ENCODE measurements at regions of chr7 and their contacts with region 1.

Region 1: DNA sequence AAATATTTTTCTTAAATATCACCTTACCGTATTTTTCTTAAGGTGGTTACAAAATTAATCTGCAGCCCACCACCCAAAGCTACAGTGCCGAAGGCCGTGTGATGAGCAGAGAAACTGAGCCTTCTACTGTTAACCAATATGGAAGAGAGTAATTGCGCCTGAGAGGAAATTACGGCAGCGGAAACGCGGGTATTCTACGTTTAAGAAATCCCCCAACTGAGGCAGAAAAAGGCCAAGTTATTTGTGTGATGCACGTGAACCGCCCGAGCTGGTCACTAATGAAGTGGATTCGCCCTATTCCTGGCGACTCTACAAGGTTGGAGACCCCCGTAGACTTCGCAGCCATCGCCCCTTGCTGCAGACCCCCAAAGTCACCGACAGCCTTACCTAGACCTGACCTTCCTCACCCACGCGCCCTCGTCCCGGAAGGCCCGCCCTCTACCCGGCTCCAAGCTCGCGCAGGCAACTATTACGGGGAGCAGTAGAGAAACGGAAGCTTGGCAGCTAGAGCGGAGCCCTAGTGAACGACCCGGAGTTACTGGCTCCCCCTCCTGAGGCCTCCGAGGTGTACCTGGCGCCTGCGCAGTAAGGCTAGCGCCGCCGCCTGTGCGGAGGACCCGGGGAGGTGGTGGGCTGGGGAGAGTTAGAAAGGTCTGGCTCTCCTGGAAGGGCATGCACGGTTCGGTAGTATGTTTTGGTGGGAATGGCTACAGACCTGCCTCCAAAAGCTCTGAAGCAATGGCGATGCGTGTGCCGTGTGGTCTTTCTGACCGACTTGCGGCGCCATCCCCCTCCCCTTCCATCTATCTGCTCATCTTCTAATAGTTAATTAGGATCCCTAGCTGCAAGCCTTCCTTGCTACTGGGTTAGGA is at the start of gene MRPS33:
- DNase-seq: peak; percentile 97
- ATAC-seq: peak; percentile 91
- H3K4me3 Mint-ChIP-seq: peak within 1 kb of the TSS; percentile 96
- H3K27ac Mint-ChIP-seq: peak within 1 kb of the TSS; percentile 99
- H3K4me1 Mint-ChIP-seq: peaks cover 32% of the 10 kb centered on the region
- H3K27me3 Mint-ChIP-seq: peaks cover 9% of the 10 kb centered on the region
- total RNA-seq, gene MRPS33: 101 to 104 TPM

Region 2: GRCh38 chr7:139180700-139181311 is 1834.0 kb before region 1 on chr7:
- CTCF ChIA-PET with region 1: no interaction called
- POLR2A ChIA-PET with region 1: no interaction called
- intact Hi-C with region 1: no loop called
- DNase-seq: no peak
- ATAC-seq: no peak
- H3K4me3 Mint-ChIP-seq: no peak overlapping the region
- H3K27ac Mint-ChIP-seq: no peak overlapping the region
- H3K4me1 Mint-ChIP-seq: no peaks in the 10 kb centered on the region
- H3K27me3 Mint-ChIP-seq: no peaks in the 10 kb centered on the region

Region 3: GRCh38 chr7:140397784-140398750 is 616.7 kb before region 1 on chr7 and contains the start of gene SLC37A3:
- CTCF ChIA-PET with region 1: no interaction called
- POLR2A ChIA-PET with region 1: no interaction called
- intact Hi-C with region 1: loop called in 1 of 2 experiments (anchors 5 kb)
- DNase-seq: peak; percentile 94
- ATAC-seq: peak; percentile 86
- H3K4me3 Mint-ChIP-seq: peak within 1 kb of the TSS; percentile 88
- H3K27ac Mint-ChIP-seq: peak within 1 kb of the TSS; percentile 91
- H3K4me1 Mint-ChIP-seq: peaks cover 37% of the 10 kb centered on the region
- H3K27me3 Mint-ChIP-seq: no peaks in the 10 kb centered on the region
- total RNA-seq, gene SLC37A3: 47.5 to 55.5 TPM

Region 4: GRCh38 chr7:140673063-140673773 is 341.5 kb before region 1 on chr7:
- CTCF ChIA-PET with region 1: interaction called, 3 read pairs
- POLR2A ChIA-PET with region 1: no interaction called
- intact Hi-C with region 1: loop called in 1 of 2 experiments (anchors 1 kb)
- DNase-seq: peak; percentile 72
- ATAC-seq: peak; percentile 74
- H3K4me3 Mint-ChIP-seq: peak overlapping the region; percentile 85
- H3K27ac Mint-ChIP-seq: peak overlapping the region; percentile 87
- H3K4me1 Mint-ChIP-seq: peaks cover 35% of the 10 kb centered on the region
- H3K27me3 Mint-ChIP-seq: no peaks in the 10 kb centered on the region

Region 5: GRCh38 chr7:140810830-140811556 is 203.8 kb before region 1 on chr7:
- CTCF ChIA-PET with region 1: interaction called, 66 read pairs
- POLR2A ChIA-PET with region 1: interaction called, 8 read pairs
- intact Hi-C with region 1: loop called (anchors 1 kb)
- DNase-seq: peak; percentile 68
- ATAC-seq: peak; percentile 77
- H3K4me3 Mint-ChIP-seq: no peak overlapping the region
- H3K27ac Mint-ChIP-seq: no peak overlapping the region
- H3K4me1 Mint-ChIP-seq: peaks cover 8% of the 10 kb centered on the region
- H3K27me3 Mint-ChIP-seq: no peaks in the 10 kb centered on the region

Region 6: GRCh38 chr7:141053626-141054025 is 38.9 kb after region 1 on chr7:
- CTCF ChIA-PET with region 1: no interaction called
- POLR2A ChIA-PET with region 1: no interaction called
- intact Hi-C with region 1: loop called in 1 of 2 experiments (anchors 2 kb)
- DNase-seq: peak; percentile 71
- ATAC-seq: peak; percentile 94
- H3K4me3 Mint-ChIP-seq: no peak overlapping the region
- H3K27ac Mint-ChIP-seq: peak overlapping the region; percentile 14
- H3K4me1 Mint-ChIP-seq: peaks cover 17% of the 10 kb centered on the region
- H3K27me3 Mint-ChIP-seq: peaks cover 4% of the 10 kb centered on the region

Region 7: GRCh38 chr7:141551094-141551781 is 536.5 kb after region 1 on chr7 and contains the start of gene AGK:
- CTCF ChIA-PET with region 1: no interaction called
- POLR2A ChIA-PET with region 1: no interaction called
- intact Hi-C with region 1: loop called (anchors 1 to 2 kb)
- DNase-seq: peak; percentile 87
- ATAC-seq: peak; percentile 95
- H3K4me3 Mint-ChIP-seq: peak within 1 kb of the TSS; percentile 88
- H3K27ac Mint-ChIP-seq: peak within 1 kb of the TSS; percentile 91
- H3K4me1 Mint-ChIP-seq: peaks cover 36% of the 10 kb centered on the region
- H3K27me3 Mint-ChIP-seq: no peaks in the 10 kb centered on the region
- total RNA-seq, gene AGK: 49.7 to 52.9 TPM